ENCODE measurements at regions of chr20 and their contacts with region 1.

Region 1: DNA sequence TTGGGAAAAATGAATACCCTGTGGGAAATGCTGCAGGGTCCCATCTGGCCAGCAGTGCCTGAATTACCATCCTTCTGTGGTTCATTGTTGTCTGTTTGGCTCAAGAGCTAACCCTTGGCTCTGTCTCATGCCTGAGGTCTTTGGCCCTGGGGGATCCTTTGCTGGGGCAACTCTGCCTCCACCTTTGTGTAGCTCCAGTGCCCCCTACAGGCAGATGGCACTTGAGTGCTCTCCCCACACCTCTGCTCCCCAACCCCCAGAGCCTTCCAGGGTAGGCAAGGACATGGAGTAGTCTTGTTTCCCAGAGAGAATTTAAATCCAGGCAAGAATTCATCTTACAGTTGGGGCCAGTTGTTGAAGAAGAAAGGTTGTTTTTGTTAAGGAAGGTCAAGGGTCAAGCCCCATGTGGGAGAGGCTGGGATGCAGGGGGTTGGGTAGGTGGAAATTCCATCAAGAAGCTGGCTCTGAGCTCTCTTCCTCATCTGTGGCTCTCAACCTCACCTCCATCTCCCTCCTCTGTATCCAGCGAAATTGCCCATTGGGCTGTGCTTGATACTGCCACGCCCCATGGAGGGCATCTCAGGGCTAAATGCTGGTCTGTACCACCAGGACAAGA is 44.2 kb downstream of the ZNF831 start:
- DNase-seq: peak; percentile 66 to 90 (median 86)
- ATAC-seq: peak; percentile 96
- H3K4me3 ChIP-seq: no peak overlapping the region
- H3K4me3 Mint-ChIP-seq: no peak overlapping the region
- H3K27ac ChIP-seq: no peak overlapping the region
- H3K27ac Mint-ChIP-seq: peak overlapping the region; percentile 76
- H3K4me1 ChIP-seq: peaks cover 25% of the 10 kb centered on the region
- H3K4me1 Mint-ChIP-seq: peaks cover 37% of the 10 kb centered on the region
- H3K27me3 ChIP-seq: no peaks in the 10 kb centered on the region
- H3K27me3 Mint-ChIP-seq: no peaks in the 10 kb centered on the region
- CTCF ChIP-seq: peak; percentile 93

Region 2: DNA sequence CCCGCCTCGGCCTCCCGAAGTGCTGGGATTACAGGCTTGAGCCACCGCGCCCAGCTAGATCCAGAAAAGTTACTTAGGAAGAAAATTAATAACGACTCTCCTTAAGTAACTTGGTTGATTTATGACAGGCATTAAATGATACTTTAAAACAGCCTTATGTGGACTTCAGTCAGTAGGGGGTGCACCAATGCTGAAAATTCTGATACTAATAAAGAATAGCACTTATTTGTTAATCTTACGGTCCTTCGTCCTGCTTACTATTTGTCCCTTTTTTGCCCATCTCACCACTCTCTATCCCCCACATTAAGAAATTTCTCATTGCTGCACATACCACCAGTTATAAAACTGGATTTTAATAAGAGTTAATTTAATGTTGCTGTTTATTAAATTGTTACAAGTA is 152.6 kb before region 1 on chr20:
- CTCF ChIA-PET with region 1: interaction called, 20 read pairs
- POLR2A ChIA-PET with region 1: interaction called, 3 read pairs
- intact Hi-C with region 1: no loop called
- DNase-seq: peak in 3 of 9 experiments; percentile 16 to 60 (median 49)
- ATAC-seq: no peak
- H3K4me3 ChIP-seq: no peak overlapping the region
- H3K4me3 Mint-ChIP-seq: no peak overlapping the region
- H3K27ac ChIP-seq: no peak overlapping the region
- H3K27ac Mint-ChIP-seq: no peak overlapping the region
- H3K4me1 ChIP-seq: no peaks in the 10 kb centered on the region
- H3K4me1 Mint-ChIP-seq: no peaks in the 10 kb centered on the region
- H3K27me3 ChIP-seq: peaks cover 0 to 4% of the 10 kb centered on the region in 2 experiments
- H3K27me3 Mint-ChIP-seq: peaks cover 33% of the 10 kb centered on the region
- CTCF ChIP-seq: peak; percentile 24

Region 3: GRCh38 chr20:59120491-59120890 is 87.4 kb before region 1 on chr20:
- CTCF ChIA-PET with region 1: interaction called, 35 read pairs
- POLR2A ChIA-PET with region 1: interaction called, 4 read pairs
- intact Hi-C with region 1: no loop called
- DNase-seq: peak in 6 of 9 experiments; percentile 16 to 82 (median 42)
- ATAC-seq: no peak
- H3K4me3 ChIP-seq: no peak overlapping the region
- H3K4me3 Mint-ChIP-seq: peak overlapping the region; percentile 61
- H3K27ac ChIP-seq: peak overlapping the region; percentile 77 to 87
- H3K27ac Mint-ChIP-seq: peak overlapping the region; percentile 98
- H3K4me1 ChIP-seq: peaks cover 84% of the 10 kb centered on the region
- H3K4me1 Mint-ChIP-seq: peaks cover 89% of the 10 kb centered on the region
- H3K27me3 ChIP-seq: no peaks in the 10 kb centered on the region
- H3K27me3 Mint-ChIP-seq: no peaks in the 10 kb centered on the region
- CTCF ChIP-seq: no peak

Region 4: DNA sequence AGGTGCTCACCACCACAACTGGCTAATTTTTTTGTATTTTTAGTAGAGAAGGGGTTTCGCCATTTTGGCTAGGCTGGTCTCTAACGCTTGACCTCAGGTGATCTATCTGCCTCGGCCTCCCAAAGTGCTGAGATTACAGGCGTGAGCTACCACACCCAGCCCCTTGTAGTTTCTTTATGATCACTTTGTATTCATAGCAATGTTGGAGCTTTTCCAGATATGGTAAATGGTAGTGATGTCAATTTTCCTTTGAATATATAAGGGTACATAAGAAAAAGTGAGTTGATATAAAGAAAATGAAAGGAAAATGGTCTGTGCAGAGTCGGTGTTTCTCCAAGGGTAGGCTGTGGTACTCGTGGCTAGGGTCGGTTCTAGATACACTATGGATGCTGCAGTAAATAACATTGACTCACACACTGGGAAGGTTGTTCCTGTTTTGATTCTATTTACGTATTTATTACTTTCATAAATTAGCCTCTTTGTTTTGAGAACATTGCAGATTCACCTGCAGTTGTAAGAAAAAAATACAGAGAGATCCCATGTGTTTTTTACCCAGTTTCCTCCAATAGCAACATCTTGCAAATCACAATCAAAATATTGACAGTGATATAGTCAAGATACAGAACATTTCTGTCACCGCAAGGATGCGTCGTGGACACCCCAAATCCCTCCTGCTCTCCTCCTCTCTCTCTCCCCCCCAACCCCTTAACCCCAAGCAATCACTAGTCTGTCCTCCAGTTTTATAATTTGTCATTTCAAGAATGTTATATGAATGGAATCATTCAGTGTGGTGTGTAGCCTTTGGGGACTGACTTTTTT is 41.8 kb before region 1 on chr20:
- CTCF ChIA-PET with region 1: interaction called, 16 read pairs
- POLR2A ChIA-PET with region 1: interaction called, 6 read pairs
- intact Hi-C with region 1: loop called in 1 of 2 experiments (anchors 5 kb)
- DNase-seq: peak in 4 of 9 experiments; percentile 20 to 79 (median 60)
- ATAC-seq: peak; percentile 64
- H3K4me3 ChIP-seq: peak overlapping the region; percentile 59 to 62
- H3K4me3 Mint-ChIP-seq: peak overlapping the region; percentile 84
- H3K27ac ChIP-seq: peak overlapping the region; percentile 93 to 95
- H3K27ac Mint-ChIP-seq: peak overlapping the region; percentile 93
- H3K4me1 ChIP-seq: peaks cover 85% of the 10 kb centered on the region
- H3K4me1 Mint-ChIP-seq: peaks cover 93% of the 10 kb centered on the region
- H3K27me3 ChIP-seq: no peaks in the 10 kb centered on the region
- H3K27me3 Mint-ChIP-seq: no peaks in the 10 kb centered on the region
- CTCF ChIP-seq: no peak

Region 5: DNA sequence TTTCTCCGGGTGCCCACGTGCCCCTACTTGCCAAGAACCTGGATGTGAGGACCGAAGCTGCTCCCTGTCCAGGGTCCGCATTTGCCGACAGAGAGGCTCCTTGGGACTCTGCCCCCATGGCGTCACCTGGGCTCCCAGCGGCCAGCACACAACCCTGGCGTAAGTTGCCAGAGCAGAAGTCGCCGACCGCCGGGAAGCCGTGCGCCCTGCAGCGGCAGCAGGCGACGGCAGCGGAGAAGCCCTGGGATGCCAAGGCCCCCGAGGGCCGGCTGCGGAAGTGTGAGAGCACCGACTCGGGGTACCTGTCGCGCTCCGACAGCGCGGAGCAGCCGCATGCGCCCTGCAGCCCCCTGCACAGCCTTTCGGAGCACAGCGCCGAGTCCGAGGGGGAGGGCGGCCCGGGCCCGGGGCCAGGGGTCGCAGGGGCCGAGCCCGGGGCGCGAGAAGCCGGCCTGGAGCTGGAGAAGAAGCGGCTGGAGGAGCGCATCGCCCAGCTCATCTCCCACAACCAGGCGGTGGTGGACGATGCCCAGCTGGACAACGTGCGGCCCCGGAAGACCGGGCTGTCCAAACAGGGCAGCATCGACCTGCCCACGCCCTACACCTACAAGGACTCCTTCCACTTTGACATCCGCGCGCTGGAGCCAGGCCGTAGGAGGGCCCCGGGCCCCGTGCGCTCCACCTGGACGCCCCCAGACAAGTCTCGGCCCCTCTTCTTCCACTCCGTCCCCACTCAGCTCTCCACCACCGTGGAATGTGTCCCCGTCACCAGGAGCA is 15.9 kb before region 1 on chr20:
- CTCF ChIA-PET with region 1: interaction called, 16 read pairs
- POLR2A ChIA-PET with region 1: interaction called, 3 read pairs
- intact Hi-C with region 1: no loop called
- DNase-seq: no peak
- ATAC-seq: no peak
- H3K4me3 ChIP-seq: no peak overlapping the region
- H3K4me3 Mint-ChIP-seq: no peak overlapping the region
- H3K27ac ChIP-seq: no peak overlapping the region
- H3K27ac Mint-ChIP-seq: no peak overlapping the region
- H3K4me1 ChIP-seq: no peaks in the 10 kb centered on the region
- H3K4me1 Mint-ChIP-seq: peaks cover 15% of the 10 kb centered on the region
- H3K27me3 ChIP-seq: no peaks in the 10 kb centered on the region
- H3K27me3 Mint-ChIP-seq: no peaks in the 10 kb centered on the region
- CTCF ChIP-seq: no peak

Region 6: DNA sequence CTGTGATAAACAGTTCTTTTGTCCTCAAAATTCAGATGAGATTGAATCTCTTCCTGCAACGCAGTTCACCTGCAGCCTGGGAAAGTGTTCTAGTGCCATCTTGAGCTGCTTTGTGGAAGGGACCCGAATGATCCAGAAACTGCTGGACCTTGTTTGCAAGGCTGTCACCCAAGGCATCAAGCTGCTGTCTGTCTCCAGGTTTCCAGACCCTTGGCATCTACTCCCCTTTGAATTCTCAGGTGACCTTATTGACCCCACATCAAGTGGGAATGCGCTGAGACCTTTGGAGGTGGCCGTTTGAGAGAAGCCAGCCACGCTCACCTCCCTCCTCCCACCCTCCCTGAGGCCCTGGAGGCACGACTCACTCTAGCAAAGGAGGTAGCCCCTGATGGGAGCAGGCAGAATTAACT is 205.0 kb after region 1 on chr20:
- CTCF ChIA-PET with region 1: no interaction called
- POLR2A ChIA-PET with region 1: no interaction called
- intact Hi-C with region 1: no loop called
- DNase-seq: no peak
- ATAC-seq: no peak
- H3K4me3 ChIP-seq: no peak overlapping the region
- H3K4me3 Mint-ChIP-seq: no peak overlapping the region
- H3K27ac ChIP-seq: no peak overlapping the region
- H3K27ac Mint-ChIP-seq: no peak overlapping the region
- H3K4me1 ChIP-seq: no peaks in the 10 kb centered on the region
- H3K4me1 Mint-ChIP-seq: no peaks in the 10 kb centered on the region
- H3K27me3 ChIP-seq: peaks cover 0 to 4% of the 10 kb centered on the region in 2 experiments
- H3K27me3 Mint-ChIP-seq: peaks cover 10% of the 10 kb centered on the region
- CTCF ChIP-seq: no peak